GM10248 (cell line): ENCODE measurements at regions of chr17 and their contacts with region 1.

Region 1: GRCh38 chr17:40355123-40355803 is 9.3 kb downstream of the GJD3 start:
- DNase-seq: peak; percentile 84
- CTCF ChIP-seq: peak; percentile 92

Region 2: DNA sequence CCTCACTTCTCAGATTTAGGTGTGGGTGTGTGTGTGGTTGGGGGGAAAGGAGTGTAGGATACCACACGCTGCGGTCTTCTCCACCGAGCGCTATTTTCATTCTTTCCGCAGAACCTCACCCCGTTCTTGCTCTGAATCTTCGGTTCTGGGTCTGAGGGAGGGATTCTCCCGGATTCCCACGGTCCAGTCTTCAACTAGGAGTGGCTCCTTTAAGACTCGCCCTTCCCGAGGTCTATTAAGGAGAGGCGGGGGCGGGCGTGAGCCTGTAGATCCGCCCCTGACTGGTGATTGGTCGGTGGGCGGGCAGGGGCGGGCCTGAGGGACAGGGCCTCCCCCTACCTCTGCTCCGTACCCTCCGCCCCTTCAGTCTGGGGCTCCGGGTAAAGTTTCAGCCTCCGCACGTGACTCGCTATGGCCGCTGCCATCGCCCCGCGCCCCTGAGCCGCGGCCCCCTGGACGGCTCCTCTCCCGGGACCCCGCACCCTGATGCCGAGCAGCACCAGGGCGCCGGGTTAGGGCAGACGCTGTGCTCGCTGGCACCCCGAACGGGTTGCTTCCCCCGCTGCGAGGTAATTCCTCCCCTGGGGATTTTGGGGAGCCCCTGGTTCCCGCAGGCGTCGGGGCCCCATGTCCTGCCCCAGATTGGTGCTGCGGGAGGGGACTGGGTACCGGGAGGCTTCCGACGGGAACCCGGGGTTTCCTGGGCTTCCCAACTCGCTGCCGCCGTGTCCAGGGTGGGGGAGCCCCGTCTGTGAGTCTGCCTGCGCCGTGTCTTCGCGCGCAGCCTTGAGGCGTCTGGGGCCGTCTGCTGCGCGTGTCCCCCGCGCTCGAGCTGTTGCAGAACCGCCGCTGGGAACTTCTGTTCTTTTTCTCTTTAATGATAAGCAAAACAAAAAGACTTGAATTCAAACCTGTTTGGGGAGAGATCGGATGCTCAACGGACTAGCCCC is 37.1 kb before region 1 on chr17:
- CTCF ChIA-PET with region 1: interaction called, 604 read pairs
- POLR2A ChIA-PET with region 1: no interaction called
- DNase-seq: peak; percentile 98
- CTCF ChIP-seq: no peak

Region 3: GRCh38 chr17:40331743-40332641 is 23.3 kb before region 1 on chr17:
- CTCF ChIA-PET with region 1: interaction called, 50 read pairs
- POLR2A ChIA-PET with region 1: no interaction called
- DNase-seq: no peak
- CTCF ChIP-seq: no peak

Region 4: GRCh38 chr17:40417609-40418427 is 62.6 kb after region 1 on chr17 and contains the start of gene TOP2A:
- CTCF ChIA-PET with region 1: interaction called, 19 read pairs
- POLR2A ChIA-PET with region 1: no interaction called
- DNase-seq: peak; percentile 100
- CTCF ChIP-seq: no peak

Region 5: GRCh38 chr17:40551879-40552768 is 196.9 kb after region 1 on chr17:
- CTCF ChIA-PET with region 1: interaction called, 11 read pairs
- POLR2A ChIA-PET with region 1: no interaction called
- DNase-seq: no peak
- CTCF ChIP-seq: no peak